HCT116 (cell line): ENCODE measurements at regions of chr7 and their contacts with region 1.

Region 1: GRCh38 chr7:123738808-123739207 is 10.0 kb downstream of the WASL start:
- DNase-seq: no peak
- ATAC-seq: no peak
- H3K4me3 ChIP-seq: no peak overlapping the region
- H3K27ac ChIP-seq: no peak overlapping the region
- H3K4me1 ChIP-seq: no peaks in the 10 kb centered on the region
- H3K27me3 ChIP-seq: no peaks in the 10 kb centered on the region
- CTCF ChIP-seq: no peak
- POLR2A ChIP-seq: no peak
- RAD21 ChIP-seq: no peak

Region 2: GRCh38 chr7:123748734-123749536 is 10.1 kb after region 1 on chr7 and contains the start of gene WASL:
- CTCF ChIA-PET with region 1: interaction called, 3 read pairs
- POLR2A ChIA-PET with region 1: interaction called, 10 read pairs
- RAD21 ChIA-PET with region 1: no interaction called
- intact Hi-C with region 1: no loop called
- DNase-seq: peak; percentile 81
- ATAC-seq: peak; percentile 80
- H3K4me3 ChIP-seq: peak within 1 kb of the TSS; percentile 65 to 80
- H3K27ac ChIP-seq: peak within 1 kb of the TSS; percentile 95
- H3K4me1 ChIP-seq: peaks cover 14 to 25% of the 10 kb centered on the region in 2 experiments; a peak in 3 of 4 replicates
- H3K27me3 ChIP-seq: no peaks in the 10 kb centered on the region
- CTCF ChIP-seq: no peak
- POLR2A ChIP-seq: peak; percentile 76
- RAD21 ChIP-seq: no peak
- total RNA-seq, gene WASL: 26.2 TPM

Region 3: GRCh38 chr7:124171068-124171467 is 432.3 kb after region 1 on chr7:
- CTCF ChIA-PET with region 1: no interaction called
- POLR2A ChIA-PET with region 1: no interaction called
- RAD21 ChIA-PET with region 1: no interaction called
- intact Hi-C with region 1: no loop called
- DNase-seq: peak; percentile 15
- ATAC-seq: 0 out of 2 replicates have a peak, but pooled peaks have one; percentile 53
- H3K4me3 ChIP-seq: no peak overlapping the region
- H3K27ac ChIP-seq: no peak overlapping the region
- H3K4me1 ChIP-seq: no peaks in the 10 kb centered on the region
- H3K27me3 ChIP-seq: no peaks in the 10 kb centered on the region
- CTCF ChIP-seq: peak; percentile 30 to 49 (median 41); a peak in 4 of 6 replicates
- POLR2A ChIP-seq: no peak
- RAD21 ChIP-seq: peak; percentile 69